Activated T-helper 2 cell treated with anti-CD3 and anti-CD28 coated beads, Interferon-gamma antibody, Interleukin-2, Interleukin-4, amounts not matched to agents 10 μg/mL and 5 μg/mL and 100 μg/mL, durations not matched to agents 14 hours and 24 hours and 36 hours (primary cell): ENCODE measurements at regions of chr4 and their contacts with region 1.

Region 1: DNA sequence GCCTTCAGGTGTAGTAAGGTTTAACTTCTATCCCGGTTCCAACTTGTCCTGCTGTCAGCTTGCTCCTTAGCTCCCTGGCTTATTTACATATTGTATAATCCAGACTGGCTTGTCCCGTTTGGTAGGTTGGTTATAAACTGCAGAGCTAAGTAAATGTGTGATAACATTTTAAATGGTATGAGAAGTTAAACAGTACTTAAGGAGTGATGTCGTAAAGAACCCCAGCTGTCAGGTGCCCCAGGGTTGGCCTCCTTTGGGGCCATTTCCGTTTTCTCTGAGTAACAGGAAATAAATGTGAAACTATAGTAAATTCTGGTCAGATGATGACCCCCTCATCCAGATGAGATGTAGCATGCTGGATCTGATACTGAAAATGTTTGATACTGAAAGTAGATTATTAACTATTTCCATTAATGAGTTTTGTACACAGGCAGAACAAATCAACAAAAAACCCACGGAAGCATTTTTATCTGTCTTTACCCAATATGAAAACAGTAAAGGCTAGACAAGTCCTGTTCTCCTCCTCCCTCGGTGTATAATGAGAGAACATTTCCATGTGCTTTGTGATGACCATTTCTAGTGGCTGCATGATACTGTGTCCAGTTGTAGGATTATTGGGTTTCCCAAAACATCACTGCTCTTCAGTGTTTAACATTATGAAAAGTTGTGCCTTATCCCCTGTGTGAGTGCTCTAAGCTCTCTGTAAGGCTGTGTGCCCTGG is 22.4 kb downstream of the GAB1 start:
- DNase-seq: peak; percentile 13
- H3K4me3 Mint-ChIP-seq: peak overlapping the region; percentile 58
- H3K27ac Mint-ChIP-seq: peak overlapping the region; percentile 89
- H3K4me1 Mint-ChIP-seq: peaks cover 27% of the 10 kb centered on the region
- H3K27me3 Mint-ChIP-seq: peaks cover 13% of the 10 kb centered on the region

Region 2: GRCh38 chr4:143335979-143336780 is 22.9 kb before region 1 on chr4:
- intact Hi-C with region 1: loop called (anchors 1 kb)
- DNase-seq: peak; percentile 23
- H3K4me3 Mint-ChIP-seq: peak overlapping the region; percentile 88
- H3K27ac Mint-ChIP-seq: no peak overlapping the region
- H3K4me1 Mint-ChIP-seq: peaks cover 6% of the 10 kb centered on the region
- H3K27me3 Mint-ChIP-seq: peaks cover 43% of the 10 kb centered on the region